ENCODE measurements at regions of chr4 and their contacts with region 1.

Region 1: GRCh38 chr4:53914313-53915016 is 149.9 kb downstream of the CHIC2 start:
- DNase-seq: no peak

Region 2: GRCh38 chr4:53196882-53197771 is 717.3 kb before region 1 on chr4:
- intact Hi-C with region 1: loop called (anchors 5 kb)
- DNase-seq: no peak

Region 3: GRCh38 chr4:54879576-54879975 is 965.1 kb after region 1 on chr4:
- intact Hi-C with region 1: no loop called
- DNase-seq: no peak